ENCODE measurements at regions of chr2 and their contacts with region 1.

Region 1: GRCh38 chr2:202870431-202871299 is 901 bp downstream of the ICA1L start:
- DNase-seq: peak; percentile 20 to 71 (median 48)
- ATAC-seq: peak; percentile 80 to 87 (median 86)
- H3K4me3 ChIP-seq: peak overlapping the region; percentile 71 to 89
- H3K4me3 Mint-ChIP-seq: peak overlapping the region; percentile 92 to 93 (median 93)
- H3K27ac ChIP-seq: peak overlapping the region; percentile 3
- H3K27ac Mint-ChIP-seq: peak overlapping the region; percentile 71 to 75
- H3K4me1 ChIP-seq: peaks cover 3 to 4% of the 10 kb centered on the region in 2 experiments
- H3K4me1 Mint-ChIP-seq: peaks cover 8 to 13% (median 11%) of the 10 kb centered on the region in 3 donors
- H3K27me3 ChIP-seq: no peaks in the 10 kb centered on the region
- H3K27me3 Mint-ChIP-seq: no peaks in the 10 kb centered on the region

Region 2: DNA sequence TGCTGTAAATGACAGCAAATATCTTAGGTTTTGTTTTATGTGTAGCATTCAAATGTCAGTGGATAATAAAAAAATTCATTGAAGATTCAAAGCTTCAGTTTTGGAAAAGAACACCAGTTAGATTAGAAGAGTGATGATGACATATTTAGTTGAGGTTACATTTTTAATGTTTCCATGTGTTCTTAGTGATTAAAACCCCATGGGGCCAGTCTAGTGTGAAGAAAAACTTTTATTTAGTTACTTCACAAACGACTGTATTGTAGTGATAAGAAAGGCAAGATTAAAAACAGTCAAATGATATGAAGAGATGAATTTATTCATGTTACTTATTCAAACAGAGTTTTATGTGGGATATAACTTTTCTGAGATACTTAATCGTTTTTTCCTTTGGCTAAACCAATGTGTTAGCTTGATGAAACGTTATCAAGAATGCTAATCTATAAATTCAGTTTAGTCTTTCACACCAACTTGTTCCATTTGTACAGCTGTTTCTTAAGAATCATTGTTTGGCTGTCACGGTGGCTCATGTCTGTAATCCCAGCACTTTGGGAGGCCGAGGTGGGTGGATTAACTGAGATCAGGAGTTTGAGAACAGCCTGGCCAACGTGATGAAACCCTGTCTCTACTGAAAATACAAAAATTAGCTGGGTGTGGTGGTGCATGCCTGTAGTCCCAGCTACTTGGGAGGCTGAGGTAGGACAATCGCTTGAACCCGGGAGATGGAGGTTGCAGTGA is 482.9 kb before region 1 on chr2:
- CTCF ChIA-PET with region 1: no interaction called
- POLR2A ChIA-PET with region 1: no interaction called
- DNase-seq: no peak
- ATAC-seq: no peak
- H3K4me3 ChIP-seq: no peak overlapping the region
- H3K4me3 Mint-ChIP-seq: no peak overlapping the region
- H3K27ac ChIP-seq: no peak overlapping the region
- H3K27ac Mint-ChIP-seq: no peak overlapping the region
- H3K4me1 ChIP-seq: no peaks in the 10 kb centered on the region
- H3K4me1 Mint-ChIP-seq: peaks cover 21 to 33% (median 25%) of the 10 kb centered on the region in 3 donors
- H3K27me3 ChIP-seq: no peaks in the 10 kb centered on the region
- H3K27me3 Mint-ChIP-seq: no peaks in the 10 kb centered on the region

Region 3: GRCh38 chr2:202514732-202515131 is 355.9 kb before region 1 on chr2:
- CTCF ChIA-PET with region 1: no interaction called
- POLR2A ChIA-PET with region 1: interaction called in 1 of 2 experiments, 11 read pairs
- DNase-seq: no peak
- ATAC-seq: no peak
- H3K4me3 ChIP-seq: no peak overlapping the region
- H3K4me3 Mint-ChIP-seq: no peak overlapping the region
- H3K27ac ChIP-seq: no peak overlapping the region
- H3K27ac Mint-ChIP-seq: no peak overlapping the region
- H3K4me1 ChIP-seq: no peaks in the 10 kb centered on the region
- H3K4me1 Mint-ChIP-seq: no peaks in the 10 kb centered on the region
- H3K27me3 ChIP-seq: no peaks in the 10 kb centered on the region
- H3K27me3 Mint-ChIP-seq: no peaks in the 10 kb centered on the region

Region 4: GRCh38 chr2:202588647-202589581 is 281.8 kb before region 1 on chr2:
- CTCF ChIA-PET with region 1: interaction called in 1 of 2 experiments, 20 read pairs
- POLR2A ChIA-PET with region 1: no interaction called
- DNase-seq: peak; percentile 47 to 83 (median 62)
- ATAC-seq: peak; percentile 94 to 99 (median 96)
- H3K4me3 ChIP-seq: no peak overlapping the region
- H3K4me3 Mint-ChIP-seq: no peak overlapping the region
- H3K27ac ChIP-seq: no peak overlapping the region
- H3K27ac Mint-ChIP-seq: peak overlapping the region in 1 of 2 donors; percentile 29
- H3K4me1 ChIP-seq: peaks cover 8 to 10% of the 10 kb centered on the region in 2 experiments
- H3K4me1 Mint-ChIP-seq: peaks cover 8 to 10% (median 8%) of the 10 kb centered on the region in 3 donors
- H3K27me3 ChIP-seq: no peaks in the 10 kb centered on the region
- H3K27me3 Mint-ChIP-seq: peaks cover 0 to 2% of the 10 kb centered on the region in 2 donors

Region 5: GRCh38 chr2:202801544-202801943 is 69.1 kb before region 1 on chr2:
- CTCF ChIA-PET with region 1: no interaction called
- POLR2A ChIA-PET with region 1: no interaction called
- DNase-seq: no peak
- ATAC-seq: no peak
- H3K4me3 ChIP-seq: no peak overlapping the region
- H3K4me3 Mint-ChIP-seq: no peak overlapping the region
- H3K27ac ChIP-seq: no peak overlapping the region
- H3K27ac Mint-ChIP-seq: no peak overlapping the region
- H3K4me1 ChIP-seq: no peaks in the 10 kb centered on the region
- H3K4me1 Mint-ChIP-seq: no peaks in the 10 kb centered on the region
- H3K27me3 ChIP-seq: no peaks in the 10 kb centered on the region
- H3K27me3 Mint-ChIP-seq: no peaks in the 10 kb centered on the region

Region 6: DNA sequence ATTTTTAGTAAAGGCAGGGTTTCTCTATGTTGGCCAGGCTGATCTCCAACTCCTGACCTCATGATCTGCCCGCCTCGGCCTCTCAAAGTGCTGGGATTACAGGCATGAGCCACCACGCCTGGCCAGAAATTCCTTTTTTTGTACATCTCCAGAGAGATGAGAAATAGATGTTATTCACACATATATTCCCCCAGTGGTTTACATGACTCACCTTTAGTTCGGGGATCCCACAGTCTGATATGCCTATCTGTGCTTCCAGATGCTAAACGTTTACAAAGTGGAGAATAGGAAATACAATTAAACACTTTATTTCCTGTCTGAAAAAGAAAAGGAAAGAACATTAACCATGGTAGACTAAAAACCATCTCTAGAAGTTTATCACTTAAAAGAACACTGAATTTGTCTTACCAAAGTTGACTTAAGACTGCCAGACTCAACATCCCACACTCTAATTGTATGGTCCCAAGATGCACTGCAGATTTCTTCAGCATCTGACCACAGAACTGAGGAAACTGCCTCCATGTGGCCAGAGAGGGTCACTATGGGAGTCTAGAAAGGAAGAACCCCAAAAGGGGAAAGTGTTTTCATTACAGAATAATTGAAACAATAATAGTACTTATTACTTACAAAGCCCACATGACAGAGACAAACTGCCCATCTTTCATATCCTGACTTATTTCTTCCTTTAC is 13.5 kb after region 1 on chr2:
- CTCF ChIA-PET with region 1: no interaction called
- POLR2A ChIA-PET with region 1: no interaction called
- DNase-seq: no peak
- ATAC-seq: no peak
- H3K4me3 ChIP-seq: no peak overlapping the region
- H3K4me3 Mint-ChIP-seq: no peak overlapping the region
- H3K27ac ChIP-seq: no peak overlapping the region
- H3K27ac Mint-ChIP-seq: no peak overlapping the region
- H3K4me1 ChIP-seq: no peaks in the 10 kb centered on the region
- H3K4me1 Mint-ChIP-seq: no peaks in the 10 kb centered on the region
- H3K27me3 ChIP-seq: no peaks in the 10 kb centered on the region
- H3K27me3 Mint-ChIP-seq: no peaks in the 10 kb centered on the region